ENCODE measurements at regions of chr1 and their contacts with region 1.

Region 1: GRCh38 chr1:54052934-54053744 is at the starts of genes TCEANC2 and TMEM59:
- DNase-seq: peak; percentile 99
- H3K4me3 ChIP-seq: peak within 1 kb of the TSS; percentile 68 to 92
- H3K27ac ChIP-seq: peak within 1 kb of the TSS; percentile 93 to 96
- H3K4me1 ChIP-seq: peaks cover 1% of the 10 kb centered on the region
- H3K27me3 ChIP-seq: no peaks in the 10 kb centered on the region
- CTCF ChIP-seq: peak in 1 of 4 experiments; percentile 35
- POLR2A ChIP-seq: peak; percentile 90
- total RNA-seq, gene TCEANC2: 2.5 to 5.0 TPM
- total RNA-seq, gene TMEM59: 394 to 817 TPM

Region 2: GRCh38 chr1:53945433-53946251 is 107.5 kb before region 1 on chr1 and contains the start of gene IFT25:
- intact Hi-C with region 1: loop called (anchors 2 kb)
- DNase-seq: peak; percentile 97
- H3K4me3 ChIP-seq: peak within 1 kb of the TSS; percentile 74 to 76
- H3K27ac ChIP-seq: peak within 1 kb of the TSS; percentile 88 to 94
- H3K4me1 ChIP-seq: peaks cover 4% of the 10 kb centered on the region
- H3K27me3 ChIP-seq: no peaks in the 10 kb centered on the region
- CTCF ChIP-seq: peak in 1 of 4 experiments; percentile 23
- POLR2A ChIP-seq: peak; percentile 92
- total RNA-seq, gene IFT25: 13.7 to 18.9 TPM

Region 3: DNA sequence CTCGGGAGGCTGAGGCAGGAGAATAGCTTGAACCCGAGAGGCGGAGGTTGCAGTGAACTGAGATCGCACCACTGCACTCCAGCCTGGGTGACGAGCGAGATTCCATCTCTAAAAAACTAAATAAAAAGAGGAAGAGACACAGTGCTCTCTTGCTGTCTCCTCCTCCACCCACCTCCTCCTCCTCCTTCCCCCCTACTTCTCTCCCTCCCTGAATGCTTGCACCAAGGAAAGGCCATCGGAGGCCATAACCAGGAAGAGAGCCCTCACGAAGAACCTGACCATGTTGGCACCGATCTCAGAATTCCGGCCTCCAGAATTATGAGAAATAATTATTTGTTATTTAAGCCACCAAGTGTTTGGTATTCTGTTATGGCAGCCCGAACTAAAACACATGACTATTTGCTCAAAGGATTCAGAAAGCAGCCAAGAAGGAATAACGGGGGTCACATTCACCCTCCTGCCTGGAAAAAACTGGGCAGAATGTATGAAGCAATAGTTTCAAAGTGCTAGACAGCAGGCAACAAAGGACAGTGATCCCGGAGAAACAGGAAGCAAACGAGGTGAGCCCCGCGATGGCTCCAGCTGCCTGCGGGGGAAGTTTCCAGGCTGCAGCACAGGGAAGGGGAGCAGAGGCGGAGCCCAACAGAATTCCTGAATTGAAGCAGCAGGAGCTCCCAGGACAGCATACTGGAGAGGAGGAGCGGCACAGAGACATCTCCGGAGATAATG is 70.9 kb before region 1 on chr1:
- intact Hi-C with region 1: loop called (anchors 5 kb)
- DNase-seq: peak; percentile 24
- H3K4me3 ChIP-seq: peak overlapping the region; percentile 17 to 25
- H3K27ac ChIP-seq: peak overlapping the region; percentile 50 to 52
- H3K4me1 ChIP-seq: no peaks in the 10 kb centered on the region
- H3K27me3 ChIP-seq: no peaks in the 10 kb centered on the region
- CTCF ChIP-seq: no peak
- POLR2A ChIP-seq: no peak

Region 4: GRCh38 chr1:54764133-54764921 is 711.2 kb after region 1 on chr1 and contains the start of gene PARS2:
- intact Hi-C with region 1: loop called (anchors 5 kb)
- DNase-seq: peak; percentile 96
- H3K4me3 ChIP-seq: peak within 1 kb of the TSS; percentile 63 to 64
- H3K27ac ChIP-seq: peak within 1 kb of the TSS; percentile 69 to 71
- H3K4me1 ChIP-seq: peaks cover 3% of the 10 kb centered on the region
- H3K27me3 ChIP-seq: no peaks in the 10 kb centered on the region
- CTCF ChIP-seq: no peak
- POLR2A ChIP-seq: peak; percentile 76
- total RNA-seq, gene PARS2: 12.0 to 12.2 TPM